ENCODE measurements at regions of chr2 and their contacts with region 1.

Region 1: GRCh38 chr2:224973112-224974016 is 68.9 kb downstream of the DOCK10 start:
- DNase-seq: no peak
- ATAC-seq: peak; percentile 86
- H3K4me3 Mint-ChIP-seq: peak overlapping the region; percentile 69
- H3K27ac Mint-ChIP-seq: peak overlapping the region; percentile 92
- H3K4me1 Mint-ChIP-seq: peaks cover 83% of the 10 kb centered on the region
- H3K27me3 Mint-ChIP-seq: no peaks in the 10 kb centered on the region
- CTCF ChIP-seq: no peak

Region 2: DNA sequence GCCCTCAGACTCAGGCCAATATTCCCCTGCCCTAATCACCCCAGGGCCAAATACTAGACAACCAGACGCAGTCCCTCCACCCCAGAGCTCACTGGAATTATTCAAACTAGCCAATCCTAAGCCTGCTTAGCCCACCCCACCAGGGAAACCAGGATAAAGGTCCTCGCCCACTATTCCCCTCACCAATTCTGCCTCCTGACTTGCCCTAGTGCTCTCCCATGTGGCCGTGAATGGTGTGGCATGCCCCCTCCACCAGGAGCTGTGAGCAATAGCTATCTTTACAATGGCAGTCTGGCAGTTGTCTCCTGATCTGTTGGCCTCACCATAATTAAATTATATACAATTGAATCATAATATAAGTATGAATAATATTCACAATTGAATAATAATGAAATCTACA is 613.8 kb before region 1 on chr2:
- CTCF ChIA-PET with region 1: no interaction called
- POLR2A ChIA-PET with region 1: no interaction called
- intact Hi-C with region 1: no loop called
- DNase-seq: no peak
- ATAC-seq: no peak
- H3K4me3 Mint-ChIP-seq: no peak overlapping the region
- H3K27ac Mint-ChIP-seq: no peak overlapping the region
- H3K4me1 Mint-ChIP-seq: no peaks in the 10 kb centered on the region
- H3K27me3 Mint-ChIP-seq: peaks cover 5% of the 10 kb centered on the region
- CTCF ChIP-seq: no peak

Region 3: GRCh38 chr2:224894356-224894755 is 79.0 kb before region 1 on chr2:
- CTCF ChIA-PET with region 1: no interaction called
- POLR2A ChIA-PET with region 1: interaction called, 6 read pairs
- intact Hi-C with region 1: loop called (anchors 2 kb)
- DNase-seq: no peak
- ATAC-seq: peak; percentile 70
- H3K4me3 Mint-ChIP-seq: peak overlapping the region; percentile 74
- H3K27ac Mint-ChIP-seq: peak overlapping the region; percentile 95
- H3K4me1 Mint-ChIP-seq: peaks cover 62% of the 10 kb centered on the region
- H3K27me3 Mint-ChIP-seq: no peaks in the 10 kb centered on the region
- CTCF ChIP-seq: no peak

Region 4: DNA sequence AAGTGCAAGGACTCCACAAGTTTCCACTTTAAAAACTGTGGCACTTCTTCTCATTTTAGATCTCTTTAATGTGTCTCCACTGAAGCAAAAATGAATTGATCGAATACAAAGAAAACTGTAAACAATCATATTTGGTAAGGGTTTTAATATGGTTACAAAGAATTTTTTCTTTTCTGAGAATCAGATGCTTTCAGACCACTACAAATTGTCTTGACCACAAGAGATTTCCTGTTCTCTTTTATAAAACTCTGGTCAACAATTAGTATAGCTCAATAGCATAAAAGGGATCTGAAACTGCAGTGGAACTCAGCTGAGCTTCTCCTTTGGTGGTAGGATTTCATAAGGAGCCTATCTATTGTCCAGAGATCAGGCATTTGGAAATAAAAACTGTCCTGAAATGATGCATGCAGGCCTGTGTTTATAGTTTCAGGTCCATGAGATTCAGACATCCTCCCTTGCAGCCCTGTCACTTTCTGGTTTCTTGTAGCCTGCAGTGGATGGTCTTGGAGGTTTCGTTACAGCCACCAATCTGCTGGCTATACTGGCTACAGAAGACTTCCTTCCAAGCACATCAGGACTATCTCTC is 51.1 kb before region 1 on chr2:
- CTCF ChIA-PET with region 1: no interaction called
- POLR2A ChIA-PET with region 1: interaction called, 3 read pairs
- intact Hi-C with region 1: loop called (anchors 2 kb)
- DNase-seq: no peak
- ATAC-seq: peak; percentile 63
- H3K4me3 Mint-ChIP-seq: peak overlapping the region; percentile 46
- H3K27ac Mint-ChIP-seq: peak overlapping the region; percentile 79
- H3K4me1 Mint-ChIP-seq: peaks cover 58% of the 10 kb centered on the region
- H3K27me3 Mint-ChIP-seq: no peaks in the 10 kb centered on the region
- CTCF ChIP-seq: no peak

Region 5: DNA sequence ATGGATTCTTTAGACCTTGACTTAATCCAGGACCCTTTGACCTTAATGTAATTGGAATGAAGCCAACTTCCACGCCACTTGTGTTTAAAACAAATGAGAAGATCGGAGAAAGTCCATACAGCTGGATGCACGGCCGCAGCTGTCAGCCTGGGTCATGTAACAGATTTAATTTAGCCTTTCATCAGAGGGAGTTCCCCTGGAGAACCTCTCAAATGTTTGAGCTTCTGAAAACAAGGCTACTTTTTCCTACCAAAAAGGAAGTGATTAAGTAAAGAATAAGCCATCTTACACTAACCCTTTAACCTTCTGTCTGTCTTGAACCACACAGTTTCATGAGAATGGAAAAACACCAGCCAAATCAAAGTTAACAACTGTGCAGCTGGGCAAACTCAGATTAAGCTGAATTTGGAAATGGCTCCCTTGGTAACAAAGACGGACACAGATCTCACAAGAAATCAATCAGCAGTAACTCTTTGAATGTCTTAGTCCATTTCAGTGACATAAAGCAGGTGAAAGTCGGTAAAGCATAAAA is 34.6 kb before region 1 on chr2:
- CTCF ChIA-PET with region 1: no interaction called
- POLR2A ChIA-PET with region 1: interaction called, 4 read pairs
- intact Hi-C with region 1: loop called (anchors 1 kb)
- DNase-seq: no peak
- ATAC-seq: peak; percentile 45
- H3K4me3 Mint-ChIP-seq: peak overlapping the region; percentile 65
- H3K27ac Mint-ChIP-seq: peak overlapping the region; percentile 82
- H3K4me1 Mint-ChIP-seq: peaks cover 82% of the 10 kb centered on the region
- H3K27me3 Mint-ChIP-seq: no peaks in the 10 kb centered on the region
- CTCF ChIP-seq: no peak

Region 6: GRCh38 chr2:224946895-224947294 is 26.5 kb before region 1 on chr2:
- CTCF ChIA-PET with region 1: no interaction called
- POLR2A ChIA-PET with region 1: interaction called, 8 read pairs
- intact Hi-C with region 1: loop called (anchors 1 kb)
- DNase-seq: no peak
- ATAC-seq: peak; percentile 65
- H3K4me3 Mint-ChIP-seq: peak overlapping the region; percentile 90
- H3K27ac Mint-ChIP-seq: peak overlapping the region; percentile 92
- H3K4me1 Mint-ChIP-seq: peaks cover 87% of the 10 kb centered on the region
- H3K27me3 Mint-ChIP-seq: no peaks in the 10 kb centered on the region
- CTCF ChIP-seq: no peak

Region 7: GRCh38 chr2:224952936-224953657 is 20.3 kb before region 1 on chr2:
- CTCF ChIA-PET with region 1: interaction called, 4 read pairs
- POLR2A ChIA-PET with region 1: interaction called, 21 read pairs
- intact Hi-C with region 1: loop called (anchors 1 kb)
- DNase-seq: no peak
- ATAC-seq: peak; percentile 83
- H3K4me3 Mint-ChIP-seq: peak overlapping the region; percentile 42
- H3K27ac Mint-ChIP-seq: peak overlapping the region; percentile 79
- H3K4me1 Mint-ChIP-seq: peaks cover 92% of the 10 kb centered on the region
- H3K27me3 Mint-ChIP-seq: no peaks in the 10 kb centered on the region
- CTCF ChIP-seq: no peak

Region 8: GRCh38 chr2:224983712-224984554 is 10.6 kb after region 1 on chr2:
- CTCF ChIA-PET with region 1: no interaction called
- POLR2A ChIA-PET with region 1: interaction called, 5 read pairs
- intact Hi-C with region 1: loop called (anchors 2 kb)
- DNase-seq: no peak
- ATAC-seq: no peak
- H3K4me3 Mint-ChIP-seq: peak overlapping the region; percentile 75
- H3K27ac Mint-ChIP-seq: peak overlapping the region; percentile 76
- H3K4me1 Mint-ChIP-seq: peaks cover 50% of the 10 kb centered on the region
- H3K27me3 Mint-ChIP-seq: no peaks in the 10 kb centered on the region
- CTCF ChIP-seq: no peak

Region 9: GRCh38 chr2:225438248-225438647 is 464.9 kb after region 1 on chr2:
- CTCF ChIA-PET with region 1: no interaction called
- POLR2A ChIA-PET with region 1: no interaction called
- intact Hi-C with region 1: no loop called
- DNase-seq: no peak
- ATAC-seq: no peak
- H3K4me3 Mint-ChIP-seq: no peak overlapping the region
- H3K27ac Mint-ChIP-seq: no peak overlapping the region
- H3K4me1 Mint-ChIP-seq: no peaks in the 10 kb centered on the region
- H3K27me3 Mint-ChIP-seq: no peaks in the 10 kb centered on the region
- CTCF ChIP-seq: no peak

Region 10: DNA sequence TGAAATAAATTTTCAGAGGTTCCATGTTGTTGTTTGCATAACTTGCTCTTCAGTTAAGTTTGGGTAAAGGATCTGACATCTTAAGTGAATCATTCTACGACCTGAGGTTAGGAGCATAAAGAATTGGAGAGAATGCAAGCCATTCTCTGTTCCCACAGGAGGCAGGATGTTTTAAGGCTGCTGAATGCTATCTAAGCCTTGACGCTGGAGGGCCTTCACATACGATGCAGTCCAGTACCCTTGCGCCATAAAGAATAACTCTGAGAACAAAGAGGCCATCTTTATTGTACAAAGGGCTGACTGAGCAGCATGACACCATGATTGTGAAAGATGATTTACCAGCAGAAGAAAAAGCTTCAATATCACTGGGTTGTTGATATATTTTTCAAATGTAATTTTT is 624.5 kb after region 1 on chr2:
- CTCF ChIA-PET with region 1: no interaction called
- POLR2A ChIA-PET with region 1: no interaction called
- intact Hi-C with region 1: no loop called
- DNase-seq: no peak
- ATAC-seq: no peak
- H3K4me3 Mint-ChIP-seq: no peak overlapping the region
- H3K27ac Mint-ChIP-seq: no peak overlapping the region
- H3K4me1 Mint-ChIP-seq: no peaks in the 10 kb centered on the region
- H3K27me3 Mint-ChIP-seq: no peaks in the 10 kb centered on the region
- CTCF ChIP-seq: no peak

Region 11: GRCh38 chr2:226411727-226412360 is 1438.5 kb after region 1 on chr2:
- CTCF ChIA-PET with region 1: no interaction called
- POLR2A ChIA-PET with region 1: no interaction called
- intact Hi-C with region 1: no loop called
- DNase-seq: no peak
- ATAC-seq: no peak
- H3K4me3 Mint-ChIP-seq: no peak overlapping the region
- H3K27ac Mint-ChIP-seq: no peak overlapping the region
- H3K4me1 Mint-ChIP-seq: no peaks in the 10 kb centered on the region
- H3K27me3 Mint-ChIP-seq: peaks cover 6% of the 10 kb centered on the region
- CTCF ChIP-seq: no peak